ENCODE measurements at regions of chr15 and their contacts with region 1.

Region 1: DNA sequence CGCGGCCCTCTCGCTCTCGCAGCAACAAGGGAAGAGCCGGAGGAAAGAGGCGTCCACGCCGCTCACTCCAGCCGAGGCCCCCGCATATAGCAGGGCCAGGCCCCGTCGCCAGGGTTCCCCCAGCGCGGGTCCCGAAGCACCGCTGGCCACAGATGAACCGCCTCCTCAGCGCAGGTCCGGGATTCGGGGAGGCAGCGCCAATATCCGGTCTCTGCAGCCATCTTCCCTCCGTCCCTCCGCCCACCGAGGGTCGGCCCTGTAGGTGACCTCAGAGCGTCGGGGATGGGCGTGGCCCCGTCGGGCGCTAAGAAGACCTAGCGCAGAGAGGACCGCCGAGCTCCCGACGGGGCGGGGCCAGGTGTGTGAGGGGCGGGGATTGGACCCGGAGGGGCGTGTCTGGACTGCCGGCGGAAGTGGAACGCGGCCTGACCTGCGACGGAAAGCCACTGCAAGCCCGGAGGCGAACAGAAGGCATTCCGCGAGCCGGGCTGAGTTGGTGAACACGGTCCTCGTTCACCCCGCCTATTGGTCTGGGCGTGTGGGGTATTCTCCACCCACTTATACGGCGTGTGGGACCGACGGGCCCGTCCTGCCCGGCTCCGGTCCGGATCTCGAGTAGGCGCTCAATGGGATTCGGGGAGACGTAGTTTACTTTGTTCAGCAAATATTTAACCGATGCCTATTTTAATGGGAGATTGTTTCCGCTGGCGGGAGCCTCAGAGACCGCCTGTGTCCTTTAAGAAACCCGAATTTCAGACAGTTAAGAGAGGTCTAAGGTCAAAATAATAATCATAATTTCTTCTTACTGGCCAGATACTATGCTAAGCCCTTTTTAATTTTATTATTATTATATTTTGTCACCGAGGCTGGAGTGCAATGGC is 26.9 kb upstream of the MTHFS start:
- DNase-seq: peak; percentile 100
- H3K4me3 Mint-ChIP-seq: peak overlapping the region; percentile 98
- H3K27ac Mint-ChIP-seq: peak overlapping the region; percentile 98
- H3K4me1 Mint-ChIP-seq: peaks cover 15% of the 10 kb centered on the region
- H3K27me3 Mint-ChIP-seq: no peaks in the 10 kb centered on the region

Region 2: DNA sequence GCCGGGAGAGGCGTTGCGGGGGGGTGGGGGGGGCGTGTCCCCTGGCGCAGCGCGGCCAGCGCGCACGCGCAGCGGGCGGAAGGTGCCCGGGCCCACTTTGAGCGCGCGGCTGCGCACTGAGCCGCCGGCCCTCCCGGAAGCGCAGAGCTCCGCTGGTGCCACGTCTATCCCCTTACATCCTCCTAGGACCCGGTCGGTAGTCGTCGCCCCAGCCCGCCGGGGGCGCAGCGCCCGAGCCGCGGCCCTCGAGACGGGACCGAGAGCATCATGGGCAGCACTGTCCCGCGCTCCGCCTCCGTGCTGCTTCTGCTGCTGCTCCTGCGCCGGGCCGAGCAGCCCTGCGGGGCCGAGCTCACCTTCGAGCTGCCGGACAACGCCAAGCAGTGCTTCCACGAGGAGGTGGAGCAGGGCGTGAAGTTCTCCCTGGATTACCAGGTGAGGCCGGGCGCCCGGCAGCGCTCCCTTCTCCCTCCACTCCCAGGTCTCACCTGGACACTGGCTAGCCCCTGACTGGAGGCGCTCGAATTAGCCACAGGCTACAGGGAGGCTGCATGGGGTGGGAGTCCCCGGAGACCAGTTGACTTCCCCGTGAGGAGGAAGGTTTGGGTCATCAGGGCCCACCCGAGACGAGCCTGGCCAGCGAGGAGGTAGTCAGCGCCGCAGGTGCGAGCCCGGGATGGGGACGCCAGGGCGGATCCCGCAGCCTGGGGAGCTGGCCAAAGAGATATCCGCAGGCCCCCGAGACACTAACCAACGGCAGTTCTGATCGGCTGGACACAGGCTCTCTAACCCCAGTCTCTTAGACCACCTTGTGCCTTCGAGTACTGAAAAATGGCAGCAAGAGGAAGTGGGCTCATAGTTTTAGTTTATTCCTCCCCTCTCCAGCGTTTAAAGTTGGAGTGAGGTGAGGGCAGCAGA is 612.5 kb before region 1 on chr15 and contains the start of gene TMED3:
- intact Hi-C with region 1: loop called (anchors 1 kb)
- DNase-seq: peak; percentile 95
- H3K4me3 Mint-ChIP-seq: peak within 1 kb of the TSS; percentile 95
- H3K27ac Mint-ChIP-seq: peak within 1 kb of the TSS; percentile 82
- H3K4me1 Mint-ChIP-seq: peaks cover 23% of the 10 kb centered on the region
- H3K27me3 Mint-ChIP-seq: peaks cover 30% of the 10 kb centered on the region
- total RNA-seq, gene TMED3: 53.9 and 54.3 TPM in 2 replicates

Region 3: DNA sequence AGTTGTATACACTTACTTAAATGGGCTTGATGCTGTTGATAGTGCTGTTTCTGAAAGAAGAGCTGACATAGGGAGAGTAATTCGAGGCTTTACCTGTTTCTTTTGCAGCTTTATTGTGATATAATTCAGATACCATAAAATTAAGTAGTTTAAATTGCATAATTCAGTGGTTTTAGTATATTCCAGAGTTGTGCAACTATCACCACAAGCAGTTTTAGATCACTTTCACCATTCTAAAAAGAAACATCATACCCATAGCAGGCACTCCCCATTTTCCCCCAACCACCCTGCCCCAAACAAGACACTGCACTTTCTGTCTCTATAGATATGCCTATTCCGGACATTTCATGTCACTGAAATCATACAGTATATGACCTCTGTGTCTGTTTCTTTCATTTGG is 125.4 kb before region 1 on chr15:
- intact Hi-C with region 1: no loop called
- DNase-seq: no peak
- H3K4me3 Mint-ChIP-seq: no peak overlapping the region
- H3K27ac Mint-ChIP-seq: no peak overlapping the region
- H3K4me1 Mint-ChIP-seq: no peaks in the 10 kb centered on the region
- H3K27me3 Mint-ChIP-seq: peaks cover 4% of the 10 kb centered on the region

Region 4: GRCh38 chr15:79896637-79897379 is 26.9 kb before region 1 on chr15 and contains the start of gene MTHFS:
- intact Hi-C with region 1: loop called (anchors 1 kb)
- DNase-seq: peak; percentile 94
- H3K4me3 Mint-ChIP-seq: peak within 1 kb of the TSS; percentile 98
- H3K27ac Mint-ChIP-seq: peak within 1 kb of the TSS; percentile 100
- H3K4me1 Mint-ChIP-seq: peaks cover 36% of the 10 kb centered on the region
- H3K27me3 Mint-ChIP-seq: no peaks in the 10 kb centered on the region
- total RNA-seq, gene MTHFS: 34.5 and 35.3 TPM in 2 replicates

Region 5: GRCh38 chr15:80152180-80152845 is 228.6 kb after region 1 on chr15:
- intact Hi-C with region 1: loop called (anchors 2 kb)
- DNase-seq: peak; percentile 93
- H3K4me3 Mint-ChIP-seq: peak overlapping the region; percentile 97
- H3K27ac Mint-ChIP-seq: peak overlapping the region; percentile 82
- H3K4me1 Mint-ChIP-seq: peaks cover 33% of the 10 kb centered on the region
- H3K27me3 Mint-ChIP-seq: peaks cover 10% of the 10 kb centered on the region